CD4-positive, alpha-beta T cell (primary cell): ENCODE measurements at regions of chr18 and their contacts with region 1.

Region 1: GRCh38 chr18:79679111-79679872 is at the start of gene CTDP1:
- DNase-seq: peak; percentile 95 to 100 (median 98)
- ATAC-seq: peak; percentile 86
- H3K4me3 ChIP-seq: peak within 1 kb of the TSS; percentile 96
- H3K4me3 Mint-ChIP-seq: peak within 1 kb of the TSS; percentile 100
- H3K27ac ChIP-seq: peak within 1 kb of the TSS; percentile 99 to 100
- H3K27ac Mint-ChIP-seq: peak within 1 kb of the TSS; percentile 100
- H3K4me1 ChIP-seq: peaks cover 60% of the 10 kb centered on the region
- H3K4me1 Mint-ChIP-seq: peaks cover 74% of the 10 kb centered on the region
- H3K27me3 ChIP-seq: no peaks in the 10 kb centered on the region
- H3K27me3 Mint-ChIP-seq: no peaks in the 10 kb centered on the region
- CTCF ChIP-seq: no peak
- total RNA-seq, gene CTDP1: 69.0 to 79.6 TPM

Region 2: DNA sequence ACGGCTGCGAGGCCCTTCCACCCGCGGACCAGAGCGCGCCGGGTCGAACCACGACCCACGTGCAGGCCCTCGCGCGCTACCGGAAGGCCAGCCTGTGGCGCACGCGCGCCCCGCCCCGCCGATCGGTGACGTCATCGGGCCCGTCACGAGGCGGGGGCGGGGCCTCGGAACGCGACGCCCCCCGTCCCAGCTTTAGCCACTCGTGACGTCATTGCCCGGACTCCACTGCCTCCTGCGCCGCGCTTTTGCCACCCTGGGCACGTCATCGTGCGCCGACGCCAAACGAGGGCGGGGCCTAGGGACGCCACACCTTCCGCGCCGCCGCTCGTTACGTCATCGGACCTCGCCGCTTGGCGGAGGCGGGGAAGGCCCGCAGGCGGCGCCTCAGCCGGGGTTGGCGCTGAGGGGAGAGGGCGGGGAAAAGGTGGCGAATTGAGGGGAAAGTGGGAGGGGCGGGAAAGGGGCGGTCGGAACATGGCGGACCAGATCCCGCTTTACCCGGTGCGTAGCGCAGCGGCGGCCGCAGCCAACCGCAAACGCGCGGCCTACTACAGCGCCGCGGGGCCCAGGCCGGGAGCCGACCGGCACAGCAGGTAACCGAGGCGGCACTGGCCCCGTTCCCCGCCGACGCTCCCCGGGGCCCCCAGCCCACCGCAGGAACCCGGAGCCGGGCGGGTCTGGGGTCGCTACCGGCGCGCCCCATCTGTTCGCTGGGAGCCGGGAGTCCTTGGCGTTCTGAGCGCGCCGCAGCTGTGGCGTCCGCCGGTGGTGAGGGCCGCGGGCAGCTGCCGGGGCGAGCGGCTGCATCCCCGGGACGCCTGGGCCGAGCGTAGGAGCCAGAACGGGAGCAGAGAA is 610.1 kb before region 1 on chr18 and contains the start of gene ATP9B:
- CTCF ChIA-PET with region 1: no interaction called
- POLR2A ChIA-PET with region 1: interaction called, 12 read pairs
- intact Hi-C with region 1: no loop called
- DNase-seq: peak; percentile 94 to 100 (median 98)
- ATAC-seq: peak; percentile 77
- H3K4me3 ChIP-seq: peak within 1 kb of the TSS; percentile 56
- H3K4me3 Mint-ChIP-seq: peak within 1 kb of the TSS; percentile 91
- H3K27ac ChIP-seq: peak within 1 kb of the TSS; percentile 97 to 98
- H3K27ac Mint-ChIP-seq: peak within 1 kb of the TSS; percentile 100
- H3K4me1 ChIP-seq: peaks cover 21% of the 10 kb centered on the region
- H3K4me1 Mint-ChIP-seq: peaks cover 60% of the 10 kb centered on the region
- H3K27me3 ChIP-seq: no peaks in the 10 kb centered on the region
- H3K27me3 Mint-ChIP-seq: peaks cover 7% of the 10 kb centered on the region
- CTCF ChIP-seq: no peak
- total RNA-seq, gene ATP9B: 61.9 to 63.5 TPM

Region 3: DNA sequence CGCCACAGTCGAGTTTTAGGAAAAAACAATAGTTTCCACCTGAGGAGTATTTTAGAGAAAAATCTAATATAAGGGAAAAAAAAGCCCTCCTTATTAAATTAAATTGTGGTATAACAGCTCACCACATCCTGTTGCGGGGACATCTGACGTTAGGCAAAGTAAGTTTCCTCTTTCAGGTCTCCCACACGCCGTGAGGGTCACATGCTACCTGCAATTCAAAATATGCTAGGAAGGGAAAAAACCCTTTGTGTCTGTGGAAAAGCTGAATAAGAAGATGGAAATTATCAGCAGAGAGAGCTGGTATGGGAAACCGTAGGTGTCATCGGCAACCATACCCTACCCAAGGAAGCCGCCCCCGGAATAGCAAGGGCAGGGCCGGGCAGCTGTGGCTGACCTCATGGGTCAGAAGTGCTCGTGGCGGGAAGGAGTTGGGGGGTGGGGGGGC is 155.5 kb before region 1 on chr18:
- CTCF ChIA-PET with region 1: no interaction called
- POLR2A ChIA-PET with region 1: interaction called, 10 read pairs
- intact Hi-C with region 1: loop called in 1 of 2 experiments (anchors 2 kb)
- DNase-seq: peak in 13 of 14 experiments; percentile 45 to 91 (median 61)
- ATAC-seq: peak; percentile 52
- H3K4me3 ChIP-seq: peak overlapping the region; percentile 48
- H3K4me3 Mint-ChIP-seq: peak overlapping the region; percentile 92
- H3K27ac ChIP-seq: peak overlapping the region; percentile 84 to 92
- H3K27ac Mint-ChIP-seq: peak overlapping the region; percentile 96
- H3K4me1 ChIP-seq: peaks cover 77% of the 10 kb centered on the region
- H3K4me1 Mint-ChIP-seq: peaks cover 82% of the 10 kb centered on the region
- H3K27me3 ChIP-seq: no peaks in the 10 kb centered on the region
- H3K27me3 Mint-ChIP-seq: no peaks in the 10 kb centered on the region
- CTCF ChIP-seq: no peak

Region 4: DNA sequence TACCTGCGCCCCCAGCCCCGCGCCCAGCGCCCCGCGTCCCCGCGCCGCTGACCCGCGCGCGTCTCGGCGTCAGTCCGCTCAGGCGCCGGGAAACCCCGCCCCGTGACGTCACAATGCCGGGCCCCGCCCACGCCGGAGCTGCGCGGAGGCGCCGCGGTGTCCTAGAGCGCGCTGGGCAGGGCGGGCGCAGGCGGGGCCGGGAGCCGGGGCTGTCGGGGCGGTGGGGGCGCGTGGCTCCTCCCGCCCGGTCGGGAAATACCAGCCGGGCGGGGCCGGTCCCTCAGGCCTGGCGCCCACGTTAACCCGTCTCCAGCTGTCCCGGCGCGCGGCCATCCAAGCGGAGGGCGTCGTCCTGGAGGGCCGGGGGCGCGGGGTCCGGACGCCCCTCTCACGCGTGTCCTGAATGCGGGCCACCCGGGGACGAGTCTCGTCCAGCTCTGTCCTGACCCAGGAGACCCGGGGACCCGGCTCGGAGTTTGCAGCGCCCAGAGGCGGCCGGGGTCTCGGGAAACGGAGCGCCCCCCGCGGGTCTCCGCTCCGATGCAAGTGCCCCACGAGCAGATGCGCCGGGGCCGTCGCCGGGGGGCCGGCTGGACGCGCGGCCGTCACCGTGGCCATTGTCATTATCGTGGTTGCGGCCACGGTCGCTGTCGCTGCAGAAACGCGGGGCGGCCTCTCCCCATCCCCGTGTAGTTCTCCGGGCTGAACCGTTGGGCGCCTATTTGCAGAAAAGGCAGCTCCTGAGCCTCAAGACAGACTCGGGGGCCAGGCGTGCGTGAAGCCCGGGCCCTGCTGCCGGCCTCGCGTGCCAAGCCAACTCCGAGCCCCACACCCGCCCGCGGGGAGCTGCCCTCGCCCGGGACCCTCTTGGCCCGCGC is 272.5 kb after region 1 on chr18 and contains the start of gene SLC66A2:
- CTCF ChIA-PET with region 1: no interaction called
- POLR2A ChIA-PET with region 1: no interaction called
- intact Hi-C with region 1: loop called (anchors 1 to 5 kb)
- DNase-seq: peak; percentile 86 to 99 (median 96)
- ATAC-seq: peak; percentile 91
- H3K4me3 ChIP-seq: peak within 1 kb of the TSS; percentile 62
- H3K4me3 Mint-ChIP-seq: peak within 1 kb of the TSS; percentile 87
- H3K27ac ChIP-seq: peak within 1 kb of the TSS in 1 of 2 donors; percentile 35
- H3K27ac Mint-ChIP-seq: peak within 1 kb of the TSS; percentile 80
- H3K4me1 ChIP-seq: peaks cover 36% of the 10 kb centered on the region
- H3K4me1 Mint-ChIP-seq: peaks cover 29% of the 10 kb centered on the region
- H3K27me3 ChIP-seq: no peaks in the 10 kb centered on the region
- H3K27me3 Mint-ChIP-seq: no peaks in the 10 kb centered on the region
- CTCF ChIP-seq: no peak
- total RNA-seq, gene SLC66A2: 44.5 to 44.8 TPM

Region 5: GRCh38 chr18:79964330-79965118 is 285.2 kb after region 1 on chr18 and contains the start of gene HSBP1L1:
- CTCF ChIA-PET with region 1: no interaction called
- POLR2A ChIA-PET with region 1: interaction called, 3 read pairs
- intact Hi-C with region 1: loop called in 1 of 2 experiments (anchors 5 kb)
- DNase-seq: peak; percentile 36 to 85 (median 64)
- ATAC-seq: peak; percentile 83
- H3K4me3 ChIP-seq: peak within 1 kb of the TSS; percentile 67
- H3K4me3 Mint-ChIP-seq: peak within 1 kb of the TSS; percentile 97
- H3K27ac ChIP-seq: peak within 1 kb of the TSS; percentile 38 to 72
- H3K27ac Mint-ChIP-seq: peak within 1 kb of the TSS; percentile 97
- H3K4me1 ChIP-seq: peaks cover 51% of the 10 kb centered on the region
- H3K4me1 Mint-ChIP-seq: peaks cover 42% of the 10 kb centered on the region
- H3K27me3 ChIP-seq: no peaks in the 10 kb centered on the region
- H3K27me3 Mint-ChIP-seq: peaks cover 4% of the 10 kb centered on the region
- CTCF ChIP-seq: peak; percentile 28
- total RNA-seq, gene HSBP1L1: 42.6 to 42.7 TPM

Region 6: DNA sequence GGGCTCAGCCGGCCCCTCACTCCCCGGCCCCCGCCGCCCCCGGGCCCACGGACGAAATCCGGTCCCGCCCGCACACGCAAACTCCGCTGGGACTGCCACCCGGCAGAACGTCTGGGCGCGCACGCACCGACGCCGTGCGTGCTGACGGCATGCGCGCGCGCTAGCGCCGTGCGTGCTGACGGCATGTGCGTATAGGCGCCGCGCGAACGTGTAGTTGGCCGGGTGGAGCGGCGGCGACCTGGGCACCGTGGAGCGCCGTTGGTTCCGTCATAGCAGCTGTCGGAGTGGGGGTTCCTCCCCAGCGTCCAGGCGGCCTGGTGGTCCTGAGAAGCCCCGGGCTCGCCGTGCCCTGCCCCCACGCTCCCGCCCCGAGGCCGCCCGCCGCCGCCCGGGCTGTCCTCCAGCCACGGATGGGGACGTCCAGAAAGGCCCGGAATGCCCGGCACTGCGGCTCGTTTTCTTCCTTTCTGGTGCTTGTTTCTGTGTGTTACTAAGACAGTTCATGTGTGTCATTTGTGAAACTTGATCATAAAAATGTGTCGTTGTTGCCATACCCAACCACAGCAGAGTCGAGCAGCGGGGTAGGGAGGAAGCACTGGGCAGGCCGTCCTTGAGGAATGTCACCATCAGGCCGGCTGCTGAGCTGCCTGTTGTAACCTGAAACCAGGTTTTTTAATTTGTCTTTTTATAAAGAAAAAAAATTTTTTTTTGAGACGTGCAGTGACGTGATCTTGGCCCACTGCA is 309.3 kb after region 1 on chr18 and contains the start of gene TXNL4A:
- CTCF ChIA-PET with region 1: no interaction called
- POLR2A ChIA-PET with region 1: interaction called, 10 read pairs
- intact Hi-C with region 1: loop called in 1 of 2 experiments (anchors 2 kb)
- DNase-seq: peak; percentile 72 to 94 (median 82)
- ATAC-seq: peak; percentile 93
- H3K4me3 ChIP-seq: peak within 1 kb of the TSS; percentile 82
- H3K4me3 Mint-ChIP-seq: peak within 1 kb of the TSS; percentile 93
- H3K27ac ChIP-seq: peak within 1 kb of the TSS; percentile 84 to 89
- H3K27ac Mint-ChIP-seq: peak within 1 kb of the TSS; percentile 89
- H3K4me1 ChIP-seq: peaks cover 31% of the 10 kb centered on the region
- H3K4me1 Mint-ChIP-seq: peaks cover 39% of the 10 kb centered on the region
- H3K27me3 ChIP-seq: no peaks in the 10 kb centered on the region
- H3K27me3 Mint-ChIP-seq: no peaks in the 10 kb centered on the region
- CTCF ChIP-seq: no peak
- total RNA-seq, gene TXNL4A: 55.0 to 55.7 TPM

Region 7: GRCh38 chr18:80108728-80109675 is 429.7 kb after region 1 on chr18 and contains the start of gene ADNP2:
- CTCF ChIA-PET with region 1: no interaction called
- POLR2A ChIA-PET with region 1: interaction called, 6 read pairs
- intact Hi-C with region 1: loop called in 1 of 2 experiments (anchors 2 kb)
- DNase-seq: peak; percentile 48 to 96 (median 76)
- ATAC-seq: peak; percentile 81
- H3K4me3 ChIP-seq: peak within 1 kb of the TSS; percentile 75
- H3K4me3 Mint-ChIP-seq: peak within 1 kb of the TSS; percentile 92
- H3K27ac ChIP-seq: peak within 1 kb of the TSS; percentile 86 to 96
- H3K27ac Mint-ChIP-seq: peak within 1 kb of the TSS; percentile 98
- H3K4me1 ChIP-seq: peaks cover 16% of the 10 kb centered on the region
- H3K4me1 Mint-ChIP-seq: peaks cover 51% of the 10 kb centered on the region
- H3K27me3 ChIP-seq: no peaks in the 10 kb centered on the region
- H3K27me3 Mint-ChIP-seq: no peaks in the 10 kb centered on the region
- CTCF ChIP-seq: no peak
- total RNA-seq, gene ADNP2: 61.0 to 61.5 TPM